ENCODE measurements at regions of chr5 and their contacts with region 1.

Region 1: DNA sequence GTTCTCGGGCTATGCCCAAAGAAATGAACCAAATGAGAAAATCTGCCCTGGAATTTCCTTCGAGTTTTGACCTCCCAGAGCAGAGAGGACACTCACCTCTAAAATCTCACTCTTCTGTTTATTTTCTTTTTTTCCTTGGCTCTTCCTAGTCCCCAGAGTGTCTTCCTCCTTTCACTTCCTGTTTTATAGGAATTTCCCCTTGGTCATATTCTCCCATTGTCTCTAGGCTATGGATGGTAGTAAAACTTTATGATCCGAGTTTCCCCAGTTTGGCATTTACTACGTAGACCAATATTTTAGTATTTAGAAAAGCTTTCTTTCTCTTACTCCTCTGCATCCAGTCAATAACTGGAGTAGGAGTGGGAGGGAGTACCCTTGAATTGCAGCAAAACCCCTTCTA is 354.5 kb upstream of the ZNF608 start:
- DNase-seq: no peak
- ATAC-seq: no peak
- H3K4me3 ChIP-seq: no peak overlapping the region
- H3K27ac ChIP-seq: no peak overlapping the region
- H3K4me1 ChIP-seq: no peaks in the 10 kb centered on the region
- H3K27me3 ChIP-seq: no peaks in the 10 kb centered on the region
- CTCF ChIP-seq: no peak
- POLR2A ChIP-seq: no peak
- RAD21 ChIP-seq: no peak

Region 2: GRCh38 chr5:124980163-124980941 is 120.6 kb before region 1 on chr5:
- CTCF ChIA-PET with region 1: no interaction called
- POLR2A ChIA-PET with region 1: no interaction called
- dilution Hi-C with region 1: no loop called
- in situ Hi-C with region 1: no loop called
- intact Hi-C with region 1: no loop called
- DNase-seq: no peak
- ATAC-seq: no peak
- H3K4me3 ChIP-seq: no peak overlapping the region
- H3K27ac ChIP-seq: no peak overlapping the region
- H3K4me1 ChIP-seq: peaks cover 4% of the 10 kb centered on the region; the same call in 1 of the 2 replicates
- H3K27me3 ChIP-seq: no peaks in the 10 kb centered on the region
- CTCF ChIP-seq: no peak
- POLR2A ChIP-seq: no peak
- RAD21 ChIP-seq: no peak

Region 3: DNA sequence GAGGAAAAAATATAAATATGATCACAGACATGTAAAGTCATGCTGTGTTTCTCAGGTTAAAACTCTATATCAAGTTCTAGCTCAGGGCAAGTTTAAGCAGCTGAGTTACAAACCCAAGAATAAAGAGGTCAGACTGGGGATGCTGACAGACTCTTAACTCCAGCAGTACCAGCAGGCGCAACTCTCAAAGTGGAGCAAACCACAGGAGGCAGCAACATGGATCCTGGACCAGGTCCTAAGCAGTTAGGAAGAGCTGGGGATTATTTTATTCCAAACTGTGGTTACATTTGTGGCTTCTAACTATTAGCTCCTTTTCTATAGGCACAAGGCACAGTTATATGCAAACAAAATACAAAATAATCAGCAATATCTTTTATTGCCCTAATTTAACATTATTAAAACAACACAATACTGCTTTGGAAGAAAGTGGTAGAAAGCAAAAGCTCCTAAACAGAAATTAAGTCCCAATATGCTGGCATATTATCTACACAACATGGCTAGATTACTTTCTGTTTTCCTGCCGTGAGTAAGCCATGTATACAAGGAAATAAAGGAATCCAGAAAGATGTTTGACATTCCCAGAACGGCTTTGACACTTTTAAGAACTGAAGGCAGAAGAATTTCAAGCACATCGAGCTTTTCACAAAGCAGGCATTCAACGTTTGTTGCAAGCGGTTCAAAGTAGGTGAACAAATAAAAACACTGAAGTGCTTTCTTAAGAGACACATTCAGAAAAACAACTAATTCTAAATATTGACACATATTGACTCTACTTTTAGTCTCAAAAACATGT is 24.3 kb after region 1 on chr5:
- CTCF ChIA-PET with region 1: no interaction called
- POLR2A ChIA-PET with region 1: interaction called, 13 read pairs
- dilution Hi-C with region 1: no loop called
- in situ Hi-C with region 1: no loop called
- intact Hi-C with region 1: no loop called
- DNase-seq: peak; percentile 9
- ATAC-seq: peak; percentile 35; the same call in 1 of the 2 replicates
- H3K4me3 ChIP-seq: no peak overlapping the region
- H3K27ac ChIP-seq: no peak overlapping the region
- H3K4me1 ChIP-seq: peaks cover 3% of the 10 kb centered on the region
- H3K27me3 ChIP-seq: no peaks in the 10 kb centered on the region
- CTCF ChIP-seq: no peak
- POLR2A ChIP-seq: no peak
- RAD21 ChIP-seq: no peak

Region 4: GRCh38 chr5:125295405-125295872 is 194.5 kb after region 1 on chr5:
- CTCF ChIA-PET with region 1: no interaction called
- POLR2A ChIA-PET with region 1: no interaction called
- dilution Hi-C with region 1: no loop called
- in situ Hi-C with region 1: no loop called
- intact Hi-C with region 1: no loop called
- DNase-seq: peak; percentile 52
- ATAC-seq: no peak
- H3K4me3 ChIP-seq: no peak overlapping the region
- H3K27ac ChIP-seq: no peak overlapping the region
- H3K4me1 ChIP-seq: peaks cover 3% of the 10 kb centered on the region; the same call in 1 of the 2 replicates
- H3K27me3 ChIP-seq: no peaks in the 10 kb centered on the region
- CTCF ChIP-seq: no peak
- POLR2A ChIP-seq: no peak
- RAD21 ChIP-seq: no peak